ENCODE measurements at regions of chr15 and their contacts with region 1.

Region 1: DNA sequence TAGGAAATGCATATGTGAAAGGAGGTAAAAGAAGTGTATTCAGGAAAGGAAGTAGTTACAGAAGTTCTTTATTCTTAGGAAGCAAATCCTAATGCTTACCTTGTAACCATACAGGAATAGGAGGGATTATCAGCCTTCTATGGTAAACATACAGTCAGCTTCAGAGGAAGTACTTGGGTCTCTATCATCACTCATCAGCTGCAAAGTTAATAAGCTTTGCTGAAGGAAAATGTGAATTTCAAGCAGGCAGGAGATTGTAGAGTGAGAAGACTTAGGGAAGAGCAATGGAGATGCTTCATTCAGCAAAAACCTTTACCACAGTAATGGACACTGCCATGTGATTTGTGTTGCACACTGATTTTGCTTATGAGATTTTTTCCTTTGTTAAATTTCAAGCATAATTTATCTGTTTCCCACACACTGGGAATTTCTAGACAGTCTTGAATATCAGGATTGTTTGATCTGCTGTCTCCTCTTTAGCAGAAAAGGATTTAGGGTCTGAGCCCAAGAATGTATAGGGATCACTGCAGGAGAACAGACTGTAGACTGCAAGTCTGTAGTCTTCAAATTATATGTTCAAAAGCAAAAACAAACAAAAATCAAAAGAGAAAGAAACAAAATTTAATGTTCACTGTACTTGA is 150.8 kb downstream of the ZNF609 start:
- DNase-seq: no peak

Region 2: GRCh38 chr15:64536244-64536836 is 74.9 kb before region 1 on chr15:
- intact Hi-C with region 1: no loop called
- DNase-seq: no peak

Region 3: DNA sequence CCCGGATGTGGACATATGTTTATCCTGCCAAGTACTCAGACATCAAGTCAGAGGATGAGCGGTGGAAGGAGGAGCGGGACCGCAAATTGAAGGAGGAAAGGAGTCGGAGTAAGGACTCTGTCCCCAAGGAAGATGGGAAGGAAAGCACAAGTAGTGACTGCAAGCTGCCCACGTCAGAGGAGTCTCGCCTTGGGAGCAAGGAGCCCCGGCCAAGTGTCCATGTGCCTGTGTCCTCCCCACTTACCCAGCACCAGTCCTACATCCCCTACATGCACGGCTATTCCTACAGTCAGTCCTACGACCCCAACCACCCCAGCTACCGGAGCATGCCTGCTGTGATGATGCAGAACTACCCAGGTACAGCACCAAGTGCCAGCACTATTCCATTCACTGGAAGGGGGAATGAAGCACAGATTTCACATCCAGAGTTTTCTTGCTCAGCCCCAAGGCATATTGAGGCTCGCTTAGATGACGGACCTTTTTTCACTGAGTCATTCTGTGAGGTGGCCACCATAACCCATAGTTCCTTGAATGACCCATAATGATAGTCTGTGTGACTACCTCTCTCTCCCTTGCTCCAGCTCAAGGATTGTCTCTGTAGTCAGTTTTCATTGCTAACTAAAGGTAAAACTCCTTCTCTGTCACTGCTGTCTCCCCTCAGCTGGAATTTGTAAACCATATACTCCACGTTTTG is 67.1 kb after region 1 on chr15:
- intact Hi-C with region 1: loop called in 1 of 2 experiments (anchors 2 kb)
- DNase-seq: no peak

Region 4: GRCh38 chr15:64731012-64731806 is 120.0 kb after region 1 on chr15:
- intact Hi-C with region 1: no loop called
- DNase-seq: peak; percentile 94